ENCODE measurements at regions of chr2 and their contacts with region 1.

Region 1: GRCh38 chr2:56960581-56960980 is 776.8 kb downstream of the CCDC85A start:
- DNase-seq: no peak
- H3K4me3 ChIP-seq: no peak overlapping the region
- H3K27ac ChIP-seq: no peak overlapping the region
- H3K4me1 ChIP-seq: no peaks in the 10 kb centered on the region
- H3K27me3 ChIP-seq: no peaks in the 10 kb centered on the region
- CTCF ChIP-seq: no peak
- EP300 ChIP-seq: no peak
- POLR2A ChIP-seq: no peak

Region 2: DNA sequence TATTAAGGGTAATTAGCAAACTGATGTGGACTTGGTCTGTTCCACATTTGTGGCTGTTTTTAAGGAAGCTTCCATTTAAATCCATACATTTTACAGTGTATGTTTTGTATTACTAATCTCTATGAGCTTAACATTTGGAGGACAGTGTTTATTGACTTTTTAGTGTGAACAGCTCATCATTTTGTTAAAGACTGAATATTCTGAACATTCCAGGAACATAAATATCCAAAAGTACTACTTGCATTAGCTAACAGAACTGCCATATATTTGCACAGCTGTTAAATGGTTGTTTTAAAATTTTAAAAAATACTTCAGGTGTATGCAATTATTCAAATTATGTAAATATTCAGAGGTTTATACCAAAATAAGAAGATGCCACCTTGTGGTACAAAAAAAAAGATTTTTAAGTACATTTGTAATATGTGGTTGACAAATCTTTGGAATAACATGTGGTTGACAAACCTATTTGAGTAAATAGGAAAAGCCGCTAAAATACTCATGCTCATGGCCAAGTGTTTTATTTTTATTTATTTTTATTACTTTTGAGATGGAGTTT is 1720.3 kb after region 1 on chr2:
- intact Hi-C with region 1: no loop called
- DNase-seq: no peak
- H3K4me3 ChIP-seq: no peak overlapping the region
- H3K27ac ChIP-seq: no peak overlapping the region
- H3K4me1 ChIP-seq: no peaks in the 10 kb centered on the region
- H3K27me3 ChIP-seq: no peaks in the 10 kb centered on the region
- CTCF ChIP-seq: no peak
- EP300 ChIP-seq: no peak
- POLR2A ChIP-seq: no peak

Region 3: DNA sequence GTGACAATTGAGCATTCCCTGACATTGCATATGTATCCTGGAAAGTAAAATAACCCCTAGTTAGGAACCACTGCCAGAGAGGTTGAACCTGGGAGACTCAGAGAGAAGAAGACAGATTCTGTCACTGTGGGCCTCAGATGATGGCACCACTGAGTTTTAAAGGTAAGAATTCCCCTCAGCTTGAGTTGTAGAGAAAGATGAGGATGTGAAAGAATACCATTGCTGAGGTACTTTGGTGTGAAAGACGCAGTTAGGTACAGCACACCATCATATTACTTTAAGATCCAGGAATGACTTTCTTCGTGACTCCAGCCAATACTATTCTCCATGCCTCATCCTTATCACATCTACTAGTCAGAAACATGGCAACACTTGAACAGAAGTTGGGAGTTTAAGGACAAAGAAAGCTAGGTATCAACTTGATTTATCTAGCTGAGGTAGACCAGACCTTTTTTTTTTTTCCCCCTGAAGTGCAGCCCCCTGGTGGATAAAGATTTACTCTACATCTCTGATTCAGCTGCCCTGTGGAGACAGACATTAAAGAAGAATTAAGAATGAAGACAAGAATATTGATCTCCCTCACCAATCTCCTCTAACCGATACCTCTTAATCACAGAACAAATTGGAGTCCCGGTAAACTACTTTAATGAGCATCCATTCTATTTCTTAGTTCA is 1911.0 kb after region 1 on chr2:
- intact Hi-C with region 1: loop called in 1 of 4 experiments (anchors 10 kb)
- DNase-seq: no peak
- H3K4me3 ChIP-seq: no peak overlapping the region
- H3K27ac ChIP-seq: no peak overlapping the region
- H3K4me1 ChIP-seq: no peaks in the 10 kb centered on the region
- H3K27me3 ChIP-seq: no peaks in the 10 kb centered on the region
- CTCF ChIP-seq: no peak
- EP300 ChIP-seq: no peak
- POLR2A ChIP-seq: no peak